A549 (cell line): ENCODE measurements at regions of chr16 and their contacts with region 1.

Region 1: GRCh38 chr16:57256642-57257395 is 11.8 kb downstream of the ARL2BP start:
- DNase-seq: no peak
- ATAC-seq: 0 out of 6 replicates have a peak, but pooled peaks of 1 of the 2 experiments have one; percentile 4
- H3K4me3 ChIP-seq: no peak overlapping the region
- H3K27ac ChIP-seq: no peak overlapping the region
- H3K4me1 ChIP-seq: peaks cover 20% of the 10 kb centered on the region
- CTCF ChIP-seq: no peak
- EP300 ChIP-seq: no peak
- POLR2A ChIP-seq: no peak
- RAD21 ChIP-seq: no peak

Region 2: DNA sequence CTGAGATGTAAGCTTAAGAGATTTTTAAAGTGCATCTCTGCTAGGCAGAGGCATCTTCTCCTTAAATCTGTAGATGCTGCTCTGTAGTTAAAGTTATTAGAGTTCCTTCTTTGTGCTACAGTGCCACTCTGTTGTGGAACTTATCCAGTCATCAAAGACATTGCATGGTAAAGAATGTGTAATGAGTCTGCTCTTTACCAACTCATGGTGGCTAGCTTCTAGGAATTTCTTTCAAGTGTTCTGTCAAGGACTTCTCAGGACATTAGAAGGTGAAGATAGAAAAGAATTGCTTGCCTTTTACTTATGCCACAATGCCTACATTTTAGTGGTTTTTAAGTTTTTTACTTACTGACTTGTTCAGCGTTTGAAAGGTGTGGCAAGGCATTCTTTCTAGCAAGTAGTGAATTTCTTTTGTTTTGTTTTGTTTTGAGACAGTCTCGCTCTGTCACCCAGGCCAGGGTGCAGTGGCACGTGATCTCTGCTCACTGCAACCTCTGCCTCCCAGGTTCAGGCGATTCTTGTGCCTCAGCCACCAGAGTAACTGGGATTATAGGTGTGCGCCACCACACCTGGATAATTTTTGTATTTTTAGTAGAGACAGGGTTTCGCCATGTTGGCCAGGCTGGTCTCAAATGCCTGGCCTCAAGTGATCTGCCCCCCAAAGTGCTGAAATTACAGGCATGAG is 32.0 kb before region 1 on chr16:
- CTCF ChIA-PET with region 1: no interaction called
- POLR2A ChIA-PET with region 1: no interaction called
- DNase-seq: no peak
- ATAC-seq: no peak
- H3K4me3 ChIP-seq: no peak overlapping the region
- H3K27ac ChIP-seq: no peak overlapping the region
- H3K4me1 ChIP-seq: no peaks in the 10 kb centered on the region
- CTCF ChIP-seq: no peak
- EP300 ChIP-seq: no peak
- POLR2A ChIP-seq: no peak
- RAD21 ChIP-seq: no peak

Region 3: DNA sequence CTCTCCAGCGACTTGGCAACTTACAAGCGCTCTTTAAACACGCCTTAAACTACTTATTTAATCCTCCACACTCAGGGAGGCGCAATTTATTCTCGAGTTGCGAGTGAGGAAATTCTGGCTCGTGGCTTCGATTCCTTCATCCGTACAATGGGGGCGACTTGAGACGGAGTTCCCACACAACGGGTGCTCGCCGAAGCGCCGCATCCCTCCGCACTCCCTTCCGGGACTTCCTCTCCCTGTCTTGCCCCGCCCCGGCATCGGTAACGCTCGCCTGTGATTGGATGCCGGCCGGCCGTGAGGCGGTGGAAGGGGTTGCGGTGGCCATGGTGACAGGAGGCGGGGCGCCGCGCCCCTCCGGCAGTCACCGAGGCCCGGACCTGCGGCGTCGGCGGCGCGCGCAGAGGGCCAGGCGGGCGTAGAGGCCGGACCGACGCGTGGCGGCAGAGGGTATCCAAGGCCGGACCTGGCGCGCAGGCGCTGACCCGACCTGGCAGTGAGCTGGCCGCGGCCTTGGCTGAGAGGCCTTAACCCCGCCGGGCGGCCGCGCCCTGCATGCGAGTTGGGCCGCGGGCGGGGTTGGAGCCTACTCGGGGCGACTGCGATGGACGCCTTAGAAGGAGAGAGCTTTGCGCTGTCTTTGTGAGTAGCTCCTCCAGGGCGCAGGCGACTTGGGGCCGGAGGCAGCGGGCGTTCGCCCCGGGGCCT is 11.9 kb before region 1 on chr16 and contains the start of gene ARL2BP:
- CTCF ChIA-PET with region 1: interaction called, 5 read pairs
- POLR2A ChIA-PET with region 1: interaction called, 11 read pairs
- DNase-seq: peak; percentile 98 to 99
- ATAC-seq: peak; percentile 96 to 98
- H3K4me3 ChIP-seq: peak within 1 kb of the TSS; percentile 78
- H3K27ac ChIP-seq: peak within 1 kb of the TSS; percentile 89 to 98
- H3K4me1 ChIP-seq: peaks cover 11% of the 10 kb centered on the region
- CTCF ChIP-seq: peak; percentile 29; the same call in 1 of the 3 replicates
- EP300 ChIP-seq: no peak
- POLR2A ChIP-seq: peak; percentile 85
- RAD21 ChIP-seq: peak; percentile 27 to 28; a peak in 2 of 5 replicates
- polyA plus RNA-seq, gene ARL2BP: 117 and 126 TPM in 2 replicates